AG04450 (cell line): ENCODE measurements at regions of chr12 and their contacts with region 1.

Region 1: DNA sequence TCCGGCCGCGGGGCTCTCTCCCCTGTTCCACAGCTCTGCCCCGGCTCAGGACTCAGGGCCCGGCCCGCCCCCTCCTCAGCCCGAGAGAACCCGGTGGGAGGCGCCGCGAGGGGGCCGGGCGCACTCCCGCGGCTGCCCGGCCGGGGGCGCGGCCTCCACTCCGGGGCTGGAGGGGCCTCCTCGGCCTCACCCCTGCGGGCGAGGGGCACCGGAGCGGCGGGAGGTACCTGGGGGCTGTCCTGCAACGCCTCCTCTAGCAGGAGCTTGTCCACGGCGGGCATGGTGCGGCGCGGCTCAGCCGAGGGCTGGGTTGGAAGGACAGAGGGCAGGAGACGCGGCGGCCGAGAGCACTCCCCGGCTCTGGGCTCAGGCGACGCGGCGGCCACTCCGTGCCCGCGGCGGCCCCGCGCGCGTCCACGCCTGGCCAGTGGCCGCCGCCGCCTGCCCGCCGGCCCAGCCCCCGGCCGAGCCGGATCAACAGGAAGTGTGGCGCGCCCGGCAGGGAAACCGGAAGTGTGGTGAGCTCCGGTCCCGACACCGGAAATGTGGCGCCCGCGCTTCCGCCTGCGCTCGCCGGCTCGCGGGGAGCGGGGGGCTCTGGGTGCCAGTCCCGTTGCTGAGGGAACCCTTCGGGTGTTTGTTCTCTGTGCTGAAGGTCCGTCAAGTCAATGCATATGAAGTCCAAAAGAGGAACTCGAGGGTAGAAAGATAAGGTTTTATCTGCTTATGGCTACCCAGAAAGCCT is at the start of gene APPL2:
- DNase-seq: peak; percentile 61
- H3K4me3 ChIP-seq: peak within 1 kb of the TSS; percentile 79
- H3K27ac ChIP-seq: peak within 1 kb of the TSS; percentile 81
- H3K27me3 ChIP-seq: no peaks in the 10 kb centered on the region
- CTCF ChIP-seq: peak; percentile 24
- polyA plus RNA-seq, gene APPL2: 37.8 and 50.1 TPM in 2 replicates

Region 2: DNA sequence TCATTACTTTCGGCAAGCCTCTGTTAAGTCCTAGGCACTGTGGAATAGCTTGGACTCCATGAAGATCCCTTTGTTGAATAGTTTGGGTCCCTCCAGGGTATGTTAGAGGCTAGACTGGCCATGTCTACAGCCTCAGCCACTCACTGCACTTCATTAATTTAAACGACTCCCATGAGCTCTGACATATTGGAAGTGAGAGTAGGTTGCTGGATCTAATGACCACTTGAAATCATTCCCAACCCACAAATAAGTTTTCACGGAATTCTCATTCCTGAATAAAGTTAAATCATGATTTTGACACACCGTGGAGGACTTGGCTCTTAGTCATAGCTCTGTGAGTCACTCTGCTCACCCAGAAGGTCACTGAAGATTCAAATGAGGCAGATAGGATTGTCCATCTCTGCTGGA is 21.4 kb after region 1 on chr12:
- CTCF ChIA-PET with region 1: interaction called, 3 read pairs
- POLR2A ChIA-PET with region 1: interaction called, 13 read pairs
- DNase-seq: peak; percentile 55
- H3K4me3 ChIP-seq: no peak overlapping the region; the same call in 1 of the 2 replicates
- H3K27ac ChIP-seq: peak overlapping the region; percentile 89
- H3K27me3 ChIP-seq: no peaks in the 10 kb centered on the region
- CTCF ChIP-seq: no peak

Region 3: GRCh38 chr12:105330283-105330930 is 94.5 kb after region 1 on chr12 and contains the start of gene C12orf75:
- CTCF ChIA-PET with region 1: no interaction called
- POLR2A ChIA-PET with region 1: interaction called, 11 read pairs
- DNase-seq: no peak
- H3K4me3 ChIP-seq: peak within 1 kb of the TSS; percentile 79
- H3K27ac ChIP-seq: peak within 1 kb of the TSS; percentile 66
- H3K27me3 ChIP-seq: no peaks in the 10 kb centered on the region
- CTCF ChIP-seq: no peak
- polyA plus RNA-seq, gene C12orf75: 252 and 350 TPM in 2 replicates